Sigmoid colon (tissue), 7 donors: ENCODE measurements at regions of chr11 and their contacts with region 1.

Region 1: GRCh38 chr11:102287964-102288724 is 29.1 kb upstream of the BIRC3 start:
- DNase-seq: no peak
- H3K4me3 ChIP-seq: peak overlapping the region in 3 of 4 donors; percentile 23 to 33 (median 28)
- H3K27ac ChIP-seq: no peak overlapping the region
- H3K4me1 ChIP-seq: peaks cover 0 to 16% (median 6%) of the 10 kb centered on the region in 4 donors
- H3K27me3 ChIP-seq: no peaks in the 10 kb centered on the region
- CTCF ChIP-seq: peak; percentile 61 to 80 (median 66)
- EP300 ChIP-seq: no peak
- POLR2A ChIP-seq: no peak

Region 2: DNA sequence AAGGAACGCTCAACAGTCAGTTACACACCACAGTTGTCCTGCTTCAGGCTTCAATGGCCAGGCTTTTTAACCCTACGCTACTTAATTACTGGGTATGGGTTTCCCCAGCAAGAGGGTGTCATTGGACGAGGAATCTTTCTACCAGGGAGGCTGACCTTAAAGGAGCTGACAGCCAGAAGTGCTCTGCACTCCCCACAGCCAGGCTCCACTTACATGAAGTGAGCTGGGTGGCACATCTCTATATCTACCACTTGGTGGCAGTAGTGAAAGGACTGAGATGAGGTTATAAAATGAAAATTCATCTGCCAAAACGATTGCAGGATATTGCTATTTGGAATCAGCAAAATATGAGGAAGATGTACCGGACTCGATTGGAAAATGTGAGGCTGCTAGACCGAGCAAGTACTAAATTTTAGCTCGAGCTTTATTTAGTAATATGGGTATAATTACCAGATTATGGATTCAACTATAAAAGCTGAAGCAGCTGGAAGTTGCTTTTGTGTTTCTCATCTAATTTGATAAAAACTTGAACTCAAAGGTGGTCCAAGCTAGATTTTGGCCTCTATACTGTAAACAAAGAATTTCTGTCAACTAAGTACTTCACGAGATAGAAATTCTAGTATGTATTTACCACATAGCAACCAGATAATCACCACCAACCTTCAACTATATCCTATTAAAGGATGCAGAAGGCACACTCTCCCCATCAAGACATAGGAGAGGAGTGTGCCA is 427.3 kb before region 1 on chr11:
- intact Hi-C with region 1: loop called (anchors 10 kb)
- DNase-seq: no peak
- H3K4me3 ChIP-seq: no peak overlapping the region
- H3K27ac ChIP-seq: no peak overlapping the region
- H3K4me1 ChIP-seq: peaks cover 0 to 19% (median 8%) of the 10 kb centered on the region in 4 donors
- H3K27me3 ChIP-seq: no peaks in the 10 kb centered on the region
- CTCF ChIP-seq: peak; percentile 30 to 83 (median 62)
- EP300 ChIP-seq: no peak
- POLR2A ChIP-seq: no peak

Region 3: GRCh38 chr11:102346748-102347461 is 58.8 kb after region 1 on chr11 and contains the start of gene BIRC2:
- intact Hi-C with region 1: loop called (anchors 5 kb)
- DNase-seq: peak; percentile 96
- H3K4me3 ChIP-seq: peak within 1 kb of the TSS; percentile 63 to 90 (median 83)
- H3K27ac ChIP-seq: peak within 1 kb of the TSS; percentile 92 to 99 (median 99)
- H3K4me1 ChIP-seq: peaks cover 0 to 38% (median 33%) of the 10 kb centered on the region in 4 donors
- H3K27me3 ChIP-seq: no peaks in the 10 kb centered on the region
- CTCF ChIP-seq: peak; percentile 61 to 86 (median 73)
- EP300 ChIP-seq: peak in 1 of 4 donors; percentile 10
- POLR2A ChIP-seq: peak; percentile 87 to 88
- total RNA-seq, gene BIRC2: 32.7 to 56.0 (median 53.2) TPM

Region 4: GRCh38 chr11:102375720-102376399 is 87.7 kb after region 1 on chr11:
- intact Hi-C with region 1: no loop called
- DNase-seq: no peak
- H3K4me3 ChIP-seq: no peak overlapping the region
- H3K27ac ChIP-seq: no peak overlapping the region
- H3K4me1 ChIP-seq: peaks cover 0 to 13% (median 7%) of the 10 kb centered on the region in 4 donors
- H3K27me3 ChIP-seq: no peaks in the 10 kb centered on the region
- CTCF ChIP-seq: no peak
- EP300 ChIP-seq: no peak
- POLR2A ChIP-seq: no peak

Region 5: GRCh38 chr11:102614485-102614884 is 326.3 kb after region 1 on chr11:
- intact Hi-C with region 1: loop called (anchors 5 kb)
- DNase-seq: no peak
- H3K4me3 ChIP-seq: no peak overlapping the region
- H3K27ac ChIP-seq: no peak overlapping the region
- H3K4me1 ChIP-seq: peaks cover 0 to 6% (median 0%) of the 10 kb centered on the region in 4 donors
- H3K27me3 ChIP-seq: no peaks in the 10 kb centered on the region
- CTCF ChIP-seq: no peak
- EP300 ChIP-seq: no peak
- POLR2A ChIP-seq: no peak

Region 6: DNA sequence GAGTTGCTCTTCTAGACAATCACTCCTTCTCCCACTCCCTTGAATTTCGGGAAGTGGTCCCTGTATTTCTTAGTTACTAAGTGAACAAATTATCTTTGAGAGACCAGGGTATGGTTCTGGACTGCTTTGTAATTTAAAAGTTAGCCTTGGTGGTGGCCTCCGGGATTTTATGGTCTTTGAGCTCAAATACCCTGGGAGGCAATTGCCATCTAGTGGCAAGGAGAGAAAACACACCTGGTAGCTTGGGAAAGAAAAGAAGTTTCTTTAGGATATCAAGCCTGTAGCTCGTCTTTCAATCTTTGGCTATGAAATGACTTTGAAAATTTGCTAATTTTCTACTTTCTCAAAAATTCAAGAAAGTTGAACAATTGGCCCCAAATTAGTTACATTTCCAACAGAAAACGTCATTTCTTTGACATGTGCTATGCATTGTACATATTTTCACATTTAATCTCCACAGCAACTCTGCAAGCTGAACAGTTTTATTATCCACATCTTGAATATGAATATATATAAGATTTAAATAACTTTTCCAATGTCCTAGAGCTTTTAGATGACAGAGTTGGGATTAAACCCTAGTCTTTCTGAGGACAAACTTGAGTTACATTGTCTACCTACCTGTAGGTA is 378.3 kb after region 1 on chr11:
- intact Hi-C with region 1: loop called (anchors 5 kb)
- DNase-seq: no peak
- H3K4me3 ChIP-seq: no peak overlapping the region
- H3K27ac ChIP-seq: no peak overlapping the region
- H3K4me1 ChIP-seq: peaks cover 0 to 7% (median 3%) of the 10 kb centered on the region in 4 donors
- H3K27me3 ChIP-seq: no peaks in the 10 kb centered on the region
- CTCF ChIP-seq: peak; percentile 60 to 77 (median 70)
- EP300 ChIP-seq: no peak
- POLR2A ChIP-seq: no peak